Endothelial cell of umbilical vein (primary cell): ENCODE measurements at regions of chr10 and their contacts with region 1.

Region 1: GRCh38 chr10:84139126-84140035 is at the start of gene GHITM:
- DNase-seq: peak; percentile 99
- H3K4me3 ChIP-seq: peak within 1 kb of the TSS; percentile 68 to 92 (median 71)
- H3K27ac ChIP-seq: peak within 1 kb of the TSS; percentile 78
- H3K4me1 ChIP-seq: peaks cover 12% of the 10 kb centered on the region
- H3K27me3 ChIP-seq: peaks cover 0 to 2% of the 10 kb centered on the region in 2 experiments
- CTCF ChIP-seq: peak; percentile 11 to 54
- POLR2A ChIP-seq: peak; percentile 63
- total RNA-seq, gene GHITM: 113 and 114 TPM in 2 replicates

Region 2: GRCh38 chr10:83625831-83626360 is 513.5 kb before region 1 on chr10:
- CTCF ChIA-PET with region 1: no interaction called
- POLR2A ChIA-PET with region 1: no interaction called
- dilution Hi-C with region 1: no loop called
- intact Hi-C with region 1: no loop called
- DNase-seq: no peak
- H3K4me3 ChIP-seq: no peak overlapping the region
- H3K27ac ChIP-seq: no peak overlapping the region
- H3K4me1 ChIP-seq: no peaks in the 10 kb centered on the region
- H3K27me3 ChIP-seq: no peaks in the 10 kb centered on the region
- CTCF ChIP-seq: no peak
- POLR2A ChIP-seq: no peak

Region 3: DNA sequence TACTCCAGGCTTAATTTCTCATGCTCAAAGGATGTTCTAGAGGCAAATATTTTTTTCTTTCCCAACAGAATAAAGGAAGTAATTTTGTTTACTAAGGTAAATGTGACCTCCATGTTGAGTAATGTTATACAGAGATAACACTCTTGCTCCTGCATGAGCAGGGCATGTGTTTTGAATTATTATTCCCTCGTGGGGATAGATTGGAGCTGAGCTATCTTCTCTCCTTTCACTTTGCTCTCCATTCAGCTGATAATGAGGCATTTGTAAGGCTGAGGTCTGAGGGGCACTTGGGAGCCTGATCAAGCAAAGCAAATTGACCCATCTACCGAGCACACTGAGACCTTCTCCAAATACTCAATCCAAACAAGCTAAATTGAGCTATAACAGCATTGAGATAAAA is 50.8 kb before region 1 on chr10:
- CTCF ChIA-PET with region 1: no interaction called
- POLR2A ChIA-PET with region 1: no interaction called
- dilution Hi-C with region 1: no loop called
- intact Hi-C with region 1: loop called (anchors 1 kb)
- DNase-seq: no peak
- H3K4me3 ChIP-seq: no peak overlapping the region
- H3K27ac ChIP-seq: no peak overlapping the region
- H3K4me1 ChIP-seq: no peaks in the 10 kb centered on the region
- H3K27me3 ChIP-seq: no peaks in the 10 kb centered on the region
- CTCF ChIP-seq: no peak
- POLR2A ChIP-seq: no peak

Region 4: GRCh38 chr10:84152769-84153168 is 13.4 kb after region 1 on chr10:
- CTCF ChIA-PET with region 1: interaction called, 27 read pairs
- POLR2A ChIA-PET with region 1: interaction called, 6 read pairs
- dilution Hi-C with region 1: no loop called
- intact Hi-C with region 1: loop called (anchors 1 kb)
- DNase-seq: no peak
- H3K4me3 ChIP-seq: no peak overlapping the region
- H3K27ac ChIP-seq: no peak overlapping the region
- H3K4me1 ChIP-seq: no peaks in the 10 kb centered on the region
- H3K27me3 ChIP-seq: no peaks in the 10 kb centered on the region
- CTCF ChIP-seq: no peak
- POLR2A ChIP-seq: no peak